ENCODE measurements at regions of chr9 and their contacts with region 1.

Region 1: DNA sequence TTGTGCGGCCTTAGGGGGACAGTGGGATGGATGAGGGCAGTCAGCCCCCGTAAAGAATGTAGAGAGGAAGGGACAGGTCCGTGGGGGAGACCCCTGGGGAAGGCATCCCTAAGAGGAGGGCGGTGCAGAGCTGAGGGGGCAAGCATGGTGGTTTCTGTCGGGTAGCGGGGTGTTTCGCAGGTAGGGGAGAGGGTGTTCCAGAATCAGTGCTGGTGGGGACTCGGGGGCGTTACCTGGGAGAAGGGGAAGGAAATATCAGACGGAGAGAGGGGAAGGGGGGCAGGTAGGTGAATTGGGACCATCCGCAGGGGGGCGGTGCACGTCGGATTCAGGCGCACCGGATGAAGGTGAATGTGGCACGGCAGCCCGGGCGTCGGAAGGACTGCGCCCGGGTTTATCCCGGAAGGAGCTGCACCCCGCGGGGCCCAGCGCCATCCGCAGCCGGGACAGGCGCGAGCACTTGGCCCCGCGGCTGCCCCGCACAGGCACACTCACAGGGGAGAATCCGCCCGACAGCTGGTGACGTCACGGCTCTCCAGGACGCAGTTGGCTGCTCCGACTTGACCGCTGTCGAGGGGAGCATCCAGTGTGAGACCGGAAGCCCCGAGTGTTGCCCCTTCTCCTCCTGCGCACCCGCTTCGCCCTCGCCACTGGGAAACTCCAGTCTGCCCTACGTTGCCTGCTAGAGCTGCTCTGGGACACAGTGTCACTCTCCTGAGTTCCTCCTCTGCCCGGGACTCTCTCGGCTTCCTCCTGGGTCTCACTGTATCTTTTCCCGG is 1.3 kb downstream of the CD72 start:
- DNase-seq: peak; percentile 88
- ATAC-seq: peak; percentile 45
- H3K4me3 Mint-ChIP-seq: peak overlapping the region; percentile 86
- H3K27ac Mint-ChIP-seq: peak overlapping the region; percentile 96
- H3K4me1 Mint-ChIP-seq: peaks cover 49% of the 10 kb centered on the region
- H3K27me3 Mint-ChIP-seq: no peaks in the 10 kb centered on the region
- CTCF ChIP-seq: peak; percentile 39

Region 2: GRCh38 chr9:35603987-35604577 is 12.8 kb before region 1 on chr9:
- CTCF ChIA-PET with region 1: interaction called, 9 read pairs
- POLR2A ChIA-PET with region 1: interaction called, 13 read pairs
- intact Hi-C with region 1: no loop called
- DNase-seq: peak; percentile 100
- ATAC-seq: peak; percentile 95
- H3K4me3 Mint-ChIP-seq: peak overlapping the region; percentile 87
- H3K27ac Mint-ChIP-seq: peak overlapping the region; percentile 95
- H3K4me1 Mint-ChIP-seq: peaks cover 28% of the 10 kb centered on the region
- H3K27me3 Mint-ChIP-seq: no peaks in the 10 kb centered on the region
- CTCF ChIP-seq: peak; percentile 95

Region 3: GRCh38 chr9:35628389-35628991 is 11.6 kb after region 1 on chr9:
- CTCF ChIA-PET with region 1: interaction called, 25 read pairs
- POLR2A ChIA-PET with region 1: interaction called, 7 read pairs
- intact Hi-C with region 1: no loop called
- DNase-seq: no peak
- ATAC-seq: no peak
- H3K4me3 Mint-ChIP-seq: no peak overlapping the region
- H3K27ac Mint-ChIP-seq: no peak overlapping the region
- H3K4me1 Mint-ChIP-seq: peaks cover 16% of the 10 kb centered on the region
- H3K27me3 Mint-ChIP-seq: no peaks in the 10 kb centered on the region
- CTCF ChIP-seq: no peak

Region 4: DNA sequence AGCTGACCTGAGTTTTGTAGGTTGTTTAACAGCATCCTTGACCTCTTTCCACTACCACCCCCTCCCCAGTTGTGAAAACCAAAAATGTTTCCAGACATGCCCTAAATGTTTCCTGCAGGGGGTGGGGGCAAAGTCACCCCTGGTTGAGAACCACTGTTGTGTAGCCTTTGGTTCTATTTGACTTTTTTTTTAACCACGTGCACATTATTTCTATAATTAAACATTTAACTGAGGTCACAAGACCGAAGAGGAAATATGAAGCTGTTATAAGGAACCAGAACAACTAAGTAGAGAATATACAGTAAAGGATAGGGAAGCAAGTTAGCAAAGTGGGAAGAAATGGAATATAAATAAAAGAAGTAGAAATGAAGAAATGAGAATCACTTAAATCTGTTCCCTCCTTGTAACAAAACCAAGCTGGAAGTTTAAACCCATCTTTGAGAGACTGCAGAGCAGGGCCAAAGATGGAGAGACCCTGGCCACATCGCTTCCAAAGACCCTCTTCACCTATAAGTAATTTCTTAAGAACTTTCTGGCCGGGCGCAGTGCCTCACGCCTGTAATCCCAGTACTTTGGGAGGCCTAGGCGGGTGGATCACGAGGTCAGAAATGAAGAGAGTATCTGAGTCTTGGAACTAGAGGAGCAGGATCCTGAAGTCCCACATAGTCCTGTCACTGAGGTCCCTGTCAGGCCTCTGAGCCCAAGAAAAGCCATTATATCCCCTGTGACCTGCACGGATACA is 19.4 kb after region 1 on chr9:
- CTCF ChIA-PET with region 1: interaction called, 25 read pairs
- POLR2A ChIA-PET with region 1: interaction called, 13 read pairs
- intact Hi-C with region 1: no loop called
- DNase-seq: no peak
- ATAC-seq: no peak
- H3K4me3 Mint-ChIP-seq: no peak overlapping the region
- H3K27ac Mint-ChIP-seq: peak overlapping the region; percentile 80
- H3K4me1 Mint-ChIP-seq: peaks cover 63% of the 10 kb centered on the region
- H3K27me3 Mint-ChIP-seq: no peaks in the 10 kb centered on the region
- CTCF ChIP-seq: no peak

Region 5: DNA sequence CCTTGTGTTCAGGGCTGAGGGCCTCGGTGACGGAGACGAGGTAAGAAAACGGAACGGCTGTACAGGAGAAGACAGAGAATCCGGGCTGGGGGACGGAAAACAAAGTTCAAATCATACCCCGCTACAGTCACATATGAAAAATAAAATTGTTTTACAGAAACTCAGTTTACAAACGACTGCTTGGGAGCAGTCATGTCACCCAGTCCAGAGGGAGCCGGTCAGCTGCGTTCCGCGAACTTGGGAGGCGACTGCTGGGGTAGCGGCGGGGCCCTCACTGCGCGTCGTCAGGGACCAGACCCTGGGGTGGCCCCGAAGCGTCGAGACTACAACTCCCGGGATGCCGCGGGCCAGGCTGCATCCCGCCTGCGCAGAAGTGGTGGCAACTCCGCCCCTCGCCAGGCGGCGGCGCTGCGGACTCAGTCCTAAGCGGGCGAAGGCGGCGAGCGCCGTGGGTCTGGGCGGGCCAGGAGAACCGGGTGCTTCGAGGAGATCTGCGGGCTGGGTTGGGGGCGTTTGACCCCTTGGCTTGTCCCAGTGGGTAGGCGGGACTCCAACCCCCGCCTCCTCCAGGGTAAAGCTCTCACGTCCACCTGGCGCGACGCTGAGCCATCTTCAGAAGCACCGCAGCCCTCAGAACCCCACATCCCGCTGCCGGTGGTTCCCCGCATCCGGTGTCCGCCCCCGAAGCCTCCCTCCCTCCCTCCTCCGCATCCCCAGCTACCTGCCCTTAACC is 29.8 kb after region 1 on chr9:
- CTCF ChIA-PET with region 1: interaction called, 62 read pairs
- POLR2A ChIA-PET with region 1: interaction called, 18 read pairs
- intact Hi-C with region 1: loop called (anchors 2 kb)
- DNase-seq: peak; percentile 94
- ATAC-seq: peak; percentile 84
- H3K4me3 Mint-ChIP-seq: peak overlapping the region; percentile 85
- H3K27ac Mint-ChIP-seq: peak overlapping the region; percentile 79
- H3K4me1 Mint-ChIP-seq: peaks cover 44% of the 10 kb centered on the region
- H3K27me3 Mint-ChIP-seq: no peaks in the 10 kb centered on the region
- CTCF ChIP-seq: peak; percentile 83

Region 6: DNA sequence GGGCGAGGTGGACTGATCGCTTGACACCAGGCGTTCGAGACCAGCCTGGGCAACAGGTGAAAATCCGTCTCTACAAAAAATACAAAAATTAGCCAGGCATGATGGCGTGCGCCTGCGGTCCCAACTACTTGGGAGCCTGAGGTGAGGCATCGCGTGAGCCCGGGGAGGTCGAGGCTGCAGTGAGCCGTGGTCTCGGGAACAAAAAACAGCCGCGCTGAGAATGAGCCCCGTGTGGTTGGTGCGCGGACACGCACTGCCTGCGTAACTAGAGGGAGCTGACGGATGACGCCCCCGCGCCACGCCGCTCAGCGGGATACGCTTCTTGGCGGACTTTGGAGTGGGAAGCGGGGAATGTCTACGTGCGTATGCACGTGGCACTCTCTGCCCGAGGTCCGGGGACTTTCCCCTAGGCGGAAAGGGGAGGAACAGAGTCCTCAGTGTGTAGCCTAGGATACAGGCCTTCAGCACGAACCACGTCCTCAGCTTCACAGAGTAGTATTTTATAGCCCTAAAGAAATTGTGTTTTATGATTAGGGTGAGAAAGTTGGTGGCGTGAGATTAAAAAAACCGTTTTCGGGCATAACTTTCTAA is 40.8 kb after region 1 on chr9 and contains the start of gene RMRP:
- CTCF ChIA-PET with region 1: interaction called, 95 read pairs
- POLR2A ChIA-PET with region 1: interaction called, 8 read pairs
- intact Hi-C with region 1: no loop called
- DNase-seq: peak; percentile 97
- ATAC-seq: peak; percentile 95
- H3K4me3 Mint-ChIP-seq: peak within 1 kb of the TSS; percentile 81
- H3K27ac Mint-ChIP-seq: peak within 1 kb of the TSS; percentile 96
- H3K4me1 Mint-ChIP-seq: peaks cover 59% of the 10 kb centered on the region
- H3K27me3 Mint-ChIP-seq: peaks cover 2% of the 10 kb centered on the region
- CTCF ChIP-seq: no peak
- total RNA-seq, gene RMRP: 13,164 to 13,311 TPM

Region 7: GRCh38 chr9:35664531-35665470 is 47.9 kb after region 1 on chr9 and contains the start of gene ARHGEF39:
- CTCF ChIA-PET with region 1: interaction called, 95 read pairs
- POLR2A ChIA-PET with region 1: interaction called, 8 read pairs
- intact Hi-C with region 1: no loop called
- DNase-seq: peak; percentile 80
- ATAC-seq: peak; percentile 89
- H3K4me3 Mint-ChIP-seq: peak within 1 kb of the TSS; percentile 84
- H3K27ac Mint-ChIP-seq: peak within 1 kb of the TSS; percentile 63
- H3K4me1 Mint-ChIP-seq: peaks cover 40% of the 10 kb centered on the region
- H3K27me3 Mint-ChIP-seq: no peaks in the 10 kb centered on the region
- CTCF ChIP-seq: no peak
- total RNA-seq, gene ARHGEF39: 16.0 to 19.9 TPM

Region 8: GRCh38 chr9:36622121-36622520 is 1005.3 kb after region 1 on chr9:
- CTCF ChIA-PET with region 1: no interaction called
- POLR2A ChIA-PET with region 1: no interaction called
- intact Hi-C with region 1: no loop called
- DNase-seq: no peak
- ATAC-seq: no peak
- H3K4me3 Mint-ChIP-seq: no peak overlapping the region
- H3K27ac Mint-ChIP-seq: no peak overlapping the region
- H3K4me1 Mint-ChIP-seq: no peaks in the 10 kb centered on the region
- H3K27me3 Mint-ChIP-seq: no peaks in the 10 kb centered on the region
- CTCF ChIP-seq: no peak

Measured in activated CD8-positive, alpha-beta T cell treated with anti-CD3 and anti-CD28 coated beads for 36 hours (primary cell).